PC-9 (cell line): ENCODE measurements at regions of chr2 and their contacts with region 1.

Region 1: DNA sequence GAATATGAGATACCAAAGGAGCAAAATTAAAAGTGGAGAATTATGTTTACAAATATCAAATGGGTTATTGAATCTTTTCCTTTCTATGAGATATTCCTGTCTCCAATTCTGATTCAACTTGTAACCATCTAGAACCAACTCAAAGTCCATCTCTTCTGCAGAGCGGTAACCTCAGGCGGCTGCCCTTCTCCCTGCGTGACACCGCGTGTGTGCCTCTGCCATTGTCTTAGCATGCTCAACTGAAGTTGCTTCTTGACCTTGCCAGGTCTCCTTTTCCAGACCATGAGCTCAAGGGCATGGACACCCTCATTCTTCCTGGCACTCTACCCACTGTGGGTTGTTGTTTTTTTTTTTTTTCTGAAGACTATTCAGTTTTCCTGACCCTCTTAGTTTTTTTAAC is 104.0 kb upstream of the FOSL2 start:
- DNase-seq: no peak
- H3K4me3 ChIP-seq: no peak overlapping the region
- H3K27ac ChIP-seq: no peak overlapping the region
- H3K4me1 ChIP-seq: no peaks in the 10 kb centered on the region
- H3K27me3 ChIP-seq: no peaks in the 10 kb centered on the region
- CTCF ChIP-seq: no peak

Region 2: DNA sequence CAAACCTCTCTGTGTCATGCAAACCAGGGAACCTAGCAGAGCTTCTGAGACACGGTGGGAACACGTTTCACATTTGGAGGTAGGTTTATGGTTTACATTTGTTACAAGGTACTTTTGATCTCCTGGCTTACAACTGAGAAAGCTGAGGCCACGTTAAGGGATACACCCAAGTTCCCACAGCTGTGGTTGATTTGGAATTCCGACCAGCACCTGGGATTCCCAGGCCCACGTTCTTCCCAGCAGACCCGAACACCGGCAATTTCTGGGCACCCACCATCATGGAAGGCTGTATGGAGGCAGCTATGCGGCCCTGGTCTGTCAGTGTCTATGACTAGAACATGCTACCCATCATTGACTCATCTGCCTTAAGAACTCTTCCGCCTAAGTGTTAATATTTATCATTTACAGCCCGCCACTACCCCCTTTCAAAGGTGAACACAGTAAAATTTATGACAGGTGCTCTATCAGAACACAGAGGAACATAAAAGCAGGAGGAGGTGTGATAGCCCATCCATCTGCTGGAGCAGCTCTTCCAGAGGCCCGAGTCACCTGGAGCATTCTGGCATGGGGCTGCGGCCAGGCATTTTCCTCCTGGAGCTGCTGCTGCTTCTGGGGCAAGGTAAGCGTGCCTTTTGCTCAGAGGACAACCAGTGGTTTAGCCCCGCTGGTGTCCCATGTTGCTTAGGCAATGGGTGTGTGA is 207.1 kb after region 1 on chr2 and contains the start of gene PLB1:
- CTCF ChIA-PET with region 1: no interaction called
- POLR2A ChIA-PET with region 1: interaction called, 18 read pairs
- intact Hi-C with region 1: no loop called
- DNase-seq: no peak
- H3K4me3 ChIP-seq: no peak within 1 kb of the TSS
- H3K27ac ChIP-seq: no peak within 1 kb of the TSS
- H3K4me1 ChIP-seq: no peaks in the 10 kb centered on the region
- H3K27me3 ChIP-seq: no peaks in the 10 kb centered on the region
- CTCF ChIP-seq: no peak
- total RNA-seq, gene PLB1: 1.7 and 2.7 TPM in 2 replicates